ENCODE measurements at regions of chr6 and their contacts with region 1.

Region 1: GRCh38 chr6:142146828-142147662 is at the starts of genes NMBR and VTA1:
- DNase-seq: peak; percentile 89 to 100 (median 95)
- ATAC-seq: peak; percentile 95
- H3K4me3 ChIP-seq: peak within 1 kb of the TSS; percentile 93 to 100
- H3K4me3 Mint-ChIP-seq: peak within 1 kb of the TSS; percentile 91
- H3K27ac ChIP-seq: peak within 1 kb of the TSS; percentile 79 to 82
- H3K27ac Mint-ChIP-seq: peak within 1 kb of the TSS; percentile 87
- H3K4me1 ChIP-seq: peaks cover 31% of the 10 kb centered on the region
- H3K4me1 Mint-ChIP-seq: peaks cover 64% of the 10 kb centered on the region
- H3K27me3 ChIP-seq: no peaks in the 10 kb centered on the region
- H3K27me3 Mint-ChIP-seq: no peaks in the 10 kb centered on the region
- CTCF ChIP-seq: peak; percentile 87
- total RNA-seq, gene NMBR: not detected
- total RNA-seq, gene VTA1: 20.7 to 24.6 TPM

Region 2: DNA sequence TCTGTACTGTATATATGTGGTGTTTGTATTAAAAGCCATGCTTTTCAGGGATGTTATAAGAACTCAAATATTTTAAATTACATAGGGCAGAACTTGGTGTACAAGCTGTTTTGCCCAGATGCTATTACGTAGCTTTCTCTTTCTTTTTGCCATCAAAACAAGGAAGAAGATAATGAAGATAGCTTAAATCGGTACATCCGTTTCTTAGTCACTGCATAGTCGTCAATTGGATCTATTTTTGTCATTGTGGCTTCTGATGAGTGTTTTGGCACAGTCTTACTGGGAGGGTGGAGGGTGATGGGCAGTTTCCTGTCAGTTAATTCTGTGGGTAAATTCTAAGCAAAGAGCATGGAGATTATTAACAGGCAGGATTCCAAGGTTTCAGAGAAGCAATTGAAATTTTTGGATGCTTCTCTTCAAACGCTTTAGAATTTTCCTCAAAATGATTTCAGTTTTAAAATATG is 663.4 kb before region 1 on chr6:
- CTCF ChIA-PET with region 1: no interaction called
- POLR2A ChIA-PET with region 1: interaction called, 7 read pairs
- intact Hi-C with region 1: loop called in 1 of 2 experiments (anchors 10 kb)
- DNase-seq: peak in 8 of 9 experiments; percentile 15 to 91 (median 58)
- ATAC-seq: peak; percentile 94
- H3K4me3 ChIP-seq: peak overlapping the region; percentile 41 to 46
- H3K4me3 Mint-ChIP-seq: peak overlapping the region; percentile 76
- H3K27ac ChIP-seq: peak overlapping the region; percentile 65 to 85
- H3K27ac Mint-ChIP-seq: peak overlapping the region; percentile 93
- H3K4me1 ChIP-seq: peaks cover 17% of the 10 kb centered on the region
- H3K4me1 Mint-ChIP-seq: peaks cover 48% of the 10 kb centered on the region
- H3K27me3 ChIP-seq: no peaks in the 10 kb centered on the region
- H3K27me3 Mint-ChIP-seq: no peaks in the 10 kb centered on the region
- CTCF ChIP-seq: no peak

Region 3: GRCh38 chr6:142236691-142237090 is 89.6 kb after region 1 on chr6:
- CTCF ChIA-PET with region 1: interaction called, 3 read pairs
- POLR2A ChIA-PET with region 1: no interaction called
- intact Hi-C with region 1: loop called in 1 of 2 experiments (anchors 1 kb)
- DNase-seq: no peak
- ATAC-seq: no peak
- H3K4me3 ChIP-seq: no peak overlapping the region
- H3K4me3 Mint-ChIP-seq: no peak overlapping the region
- H3K27ac ChIP-seq: no peak overlapping the region
- H3K27ac Mint-ChIP-seq: no peak overlapping the region
- H3K4me1 ChIP-seq: peaks cover 15% of the 10 kb centered on the region
- H3K4me1 Mint-ChIP-seq: peaks cover 18% of the 10 kb centered on the region
- H3K27me3 ChIP-seq: no peaks in the 10 kb centered on the region
- H3K27me3 Mint-ChIP-seq: peaks cover 4% of the 10 kb centered on the region
- CTCF ChIP-seq: no peak

Region 4: DNA sequence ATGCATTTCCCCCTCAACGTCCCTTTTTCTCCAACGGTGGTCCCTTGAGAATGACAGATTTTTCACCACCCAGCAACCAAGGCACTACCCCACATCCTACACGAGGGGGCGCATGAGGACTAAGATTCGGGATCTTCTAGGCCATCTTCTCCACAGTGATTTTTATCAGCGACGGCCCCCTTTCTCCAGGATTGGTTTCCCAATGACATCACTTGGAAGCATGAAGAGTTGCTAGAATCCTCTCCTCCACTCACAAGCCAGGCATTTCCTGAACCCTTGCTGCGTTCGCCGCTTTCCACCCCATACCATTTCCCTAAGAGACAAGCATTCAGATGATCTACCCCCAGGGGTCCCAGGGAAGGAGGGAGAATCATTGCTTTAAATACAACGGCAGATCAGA is 545.9 kb after region 1 on chr6:
- CTCF ChIA-PET with region 1: no interaction called
- POLR2A ChIA-PET with region 1: no interaction called
- intact Hi-C with region 1: loop called in 1 of 2 experiments (anchors 1 kb)
- DNase-seq: peak; percentile 47 to 82 (median 71)
- ATAC-seq: peak; percentile 88
- H3K4me3 ChIP-seq: no peak overlapping the region
- H3K4me3 Mint-ChIP-seq: no peak overlapping the region
- H3K27ac ChIP-seq: no peak overlapping the region
- H3K27ac Mint-ChIP-seq: no peak overlapping the region
- H3K4me1 ChIP-seq: peaks cover 4% of the 10 kb centered on the region
- H3K4me1 Mint-ChIP-seq: peaks cover 6% of the 10 kb centered on the region
- H3K27me3 ChIP-seq: no peaks in the 10 kb centered on the region
- H3K27me3 Mint-ChIP-seq: no peaks in the 10 kb centered on the region
- CTCF ChIP-seq: peak; percentile 90

Region 5: DNA sequence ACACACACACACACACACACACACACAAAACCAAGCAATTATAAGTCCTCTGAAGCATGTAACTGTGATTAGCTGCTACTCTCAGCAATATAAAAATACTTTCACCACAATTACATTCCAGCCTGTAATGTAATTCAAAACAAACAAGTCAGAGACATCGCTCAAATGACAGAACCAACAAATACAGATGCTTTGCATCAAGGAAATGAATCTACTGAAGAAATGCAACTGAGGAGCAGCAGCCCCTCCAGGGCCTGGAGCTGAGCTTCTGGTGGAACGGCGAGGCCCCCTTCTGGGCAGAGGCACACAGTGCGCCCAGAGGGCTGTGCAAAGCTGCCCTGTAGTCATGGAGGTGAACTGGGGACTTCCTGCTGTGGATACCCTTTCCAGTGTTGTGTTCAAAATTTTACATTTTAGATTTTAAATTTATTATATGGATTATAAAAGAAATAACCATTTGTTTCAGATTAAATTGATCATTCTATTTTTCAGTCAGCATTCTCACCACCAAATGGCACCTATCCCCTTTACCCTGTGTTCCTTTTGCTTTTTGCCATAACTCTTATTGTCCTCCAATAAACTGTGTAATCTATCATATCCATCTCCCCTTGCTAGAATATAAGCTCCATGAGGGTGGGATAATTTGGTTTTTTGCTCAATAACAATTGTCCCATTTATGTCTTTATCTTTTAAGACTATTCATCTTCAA is 1280.2 kb after region 1 on chr6:
- CTCF ChIA-PET with region 1: interaction called, 3 read pairs
- POLR2A ChIA-PET with region 1: no interaction called
- intact Hi-C with region 1: loop called (anchors 2 to 5 kb)
- DNase-seq: peak; percentile 42 to 81 (median 72)
- ATAC-seq: peak; percentile 100
- H3K4me3 ChIP-seq: no peak overlapping the region
- H3K4me3 Mint-ChIP-seq: no peak overlapping the region
- H3K27ac ChIP-seq: no peak overlapping the region
- H3K27ac Mint-ChIP-seq: no peak overlapping the region
- H3K4me1 ChIP-seq: no peaks in the 10 kb centered on the region
- H3K4me1 Mint-ChIP-seq: peaks cover 2% of the 10 kb centered on the region
- H3K27me3 ChIP-seq: no peaks in the 10 kb centered on the region
- H3K27me3 Mint-ChIP-seq: no peaks in the 10 kb centered on the region
- CTCF ChIP-seq: peak; percentile 95

Region 6: GRCh38 chr6:143536865-143537691 is 1390.0 kb after region 1 on chr6:
- CTCF ChIA-PET with region 1: no interaction called
- POLR2A ChIA-PET with region 1: no interaction called
- intact Hi-C with region 1: loop called in 1 of 2 experiments (anchors 2 kb)
- DNase-seq: peak; percentile 25 to 79 (median 57)
- ATAC-seq: peak; percentile 75
- H3K4me3 ChIP-seq: peak overlapping the region; percentile 54 to 73
- H3K4me3 Mint-ChIP-seq: peak overlapping the region; percentile 84
- H3K27ac ChIP-seq: peak overlapping the region in 1 of 2 experiments; percentile 62
- H3K27ac Mint-ChIP-seq: peak overlapping the region; percentile 90
- H3K4me1 ChIP-seq: peaks cover 5% of the 10 kb centered on the region
- H3K4me1 Mint-ChIP-seq: peaks cover 36% of the 10 kb centered on the region
- H3K27me3 ChIP-seq: no peaks in the 10 kb centered on the region
- H3K27me3 Mint-ChIP-seq: no peaks in the 10 kb centered on the region
- CTCF ChIP-seq: peak; percentile 53

Region 7: DNA sequence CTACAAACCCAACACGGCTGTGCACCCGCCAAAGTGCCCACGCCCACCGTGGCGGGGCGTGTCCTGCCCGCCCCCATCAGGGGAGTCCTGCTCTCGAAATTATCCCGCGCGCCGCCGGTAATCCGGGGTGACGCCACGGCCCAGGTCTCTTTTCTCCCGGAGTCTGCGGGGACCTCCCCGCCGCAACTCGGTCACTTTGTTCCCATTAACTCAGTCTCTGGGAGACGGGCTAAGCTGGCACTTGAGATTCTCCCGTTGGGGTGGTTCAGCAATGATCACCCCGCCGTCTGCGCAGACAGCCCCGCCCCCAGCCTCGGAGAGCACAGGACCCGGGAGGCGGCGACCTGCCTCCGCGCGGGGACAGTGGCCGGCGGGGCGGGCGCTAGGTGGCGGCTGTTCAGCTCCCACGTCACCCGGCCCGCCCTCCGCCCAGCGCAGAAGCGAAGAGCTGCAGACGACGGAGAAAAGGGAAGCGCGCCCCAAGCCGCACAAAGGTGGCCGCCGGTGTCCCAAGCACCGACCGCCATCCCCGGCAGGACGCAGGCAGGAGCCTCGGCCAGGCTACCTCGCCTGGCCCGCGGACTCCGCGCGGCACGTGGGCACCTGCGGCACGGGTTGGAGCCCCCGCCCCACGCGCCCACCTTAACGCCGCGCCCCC is 1916.8 kb after region 1 on chr6:
- CTCF ChIA-PET with region 1: no interaction called
- POLR2A ChIA-PET with region 1: no interaction called
- intact Hi-C with region 1: loop called in 1 of 2 experiments (anchors 5 kb)
- DNase-seq: peak; percentile 85 to 96 (median 91)
- ATAC-seq: peak; percentile 90
- H3K4me3 ChIP-seq: peak overlapping the region; percentile 93 to 97
- H3K4me3 Mint-ChIP-seq: peak overlapping the region; percentile 91
- H3K27ac ChIP-seq: peak overlapping the region; percentile 86 to 88
- H3K27ac Mint-ChIP-seq: peak overlapping the region; percentile 95
- H3K4me1 ChIP-seq: peaks cover 16% of the 10 kb centered on the region
- H3K4me1 Mint-ChIP-seq: peaks cover 30% of the 10 kb centered on the region
- H3K27me3 ChIP-seq: no peaks in the 10 kb centered on the region
- H3K27me3 Mint-ChIP-seq: no peaks in the 10 kb centered on the region
- CTCF ChIP-seq: no peak

Measured in CD8-positive, alpha-beta T cell (primary cell).